ENCODE measurements at regions of chr1 and their contacts with region 1.

Region 1: DNA sequence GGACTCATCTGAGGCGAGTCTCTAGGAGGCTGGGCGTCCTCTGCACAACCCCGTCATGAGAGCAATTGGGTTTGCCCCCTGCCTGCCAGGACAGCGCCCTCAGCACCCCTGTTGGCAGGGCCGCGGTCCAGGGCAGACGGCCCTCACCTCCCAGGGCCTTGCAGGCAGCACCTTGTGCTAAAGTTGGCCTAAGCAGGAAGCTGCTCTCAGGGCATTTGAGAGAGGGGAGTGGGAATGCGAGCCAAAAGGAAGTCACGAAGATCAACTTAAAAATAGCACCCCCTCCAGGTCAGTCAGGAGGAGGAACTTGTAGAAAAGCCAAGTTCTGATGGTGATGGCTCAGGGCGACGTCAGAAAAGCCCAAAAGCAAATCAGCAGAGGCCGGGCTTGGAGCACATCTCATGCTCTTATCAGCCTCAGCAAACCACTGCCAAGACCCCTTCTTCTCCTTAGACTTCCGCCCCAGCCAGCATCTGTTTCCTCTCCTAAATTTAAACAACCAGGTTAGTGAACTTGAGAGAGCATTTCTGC is 12.6 kb upstream of the ADORA3 start:
- DNase-seq: peak in 3 of 10 donors; percentile 44 to 50 (median 49)
- H3K4me3 ChIP-seq: peak overlapping the region; percentile 0 to 68 (median 52)
- H3K27ac ChIP-seq: peak overlapping the region in 53 of 59 donors; percentile 12 to 91 (median 77)
- H3K27me3 ChIP-seq: no peaks in the 10 kb centered on the region
- CTCF ChIP-seq: peak in 31 of 56 donors; percentile 8 to 41 (median 21)

Region 2: DNA sequence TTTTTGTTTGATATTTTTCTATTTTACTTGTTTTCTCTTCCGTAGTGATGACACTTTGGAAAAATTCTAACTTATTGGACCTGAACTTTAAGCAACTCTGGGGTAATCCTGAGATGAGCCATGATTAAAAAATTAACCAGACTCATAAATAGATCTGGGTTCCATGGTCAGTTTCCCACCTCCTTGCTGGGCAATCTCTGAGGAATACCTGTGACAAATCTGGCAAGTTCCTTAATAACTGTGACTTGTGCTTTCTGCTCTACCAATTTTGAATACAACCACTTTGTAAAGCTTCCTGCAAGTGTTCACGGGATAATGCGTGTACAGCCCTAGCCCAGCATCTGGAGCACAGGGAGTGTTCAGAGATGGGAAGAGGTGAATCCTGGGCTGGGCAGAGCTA is 91.8 kb before region 1 on chr1:
- intact Hi-C with region 1: no loop called
- DNase-seq: no peak
- H3K4me3 ChIP-seq: no peak overlapping the region
- H3K27ac ChIP-seq: no peak overlapping the region
- H3K27me3 ChIP-seq: no peaks in the 10 kb centered on the region
- CTCF ChIP-seq: no peak

Region 3: GRCh38 chr1:111441573-111442192 is 74.4 kb before region 1 on chr1:
- intact Hi-C with region 1: no loop called
- DNase-seq: no peak
- H3K4me3 ChIP-seq: no peak overlapping the region
- H3K27ac ChIP-seq: no peak overlapping the region
- H3K27me3 ChIP-seq: no peaks in the 10 kb centered on the region
- CTCF ChIP-seq: peak in 25 of 56 donors; percentile 9 to 38 (median 21)

Region 4: DNA sequence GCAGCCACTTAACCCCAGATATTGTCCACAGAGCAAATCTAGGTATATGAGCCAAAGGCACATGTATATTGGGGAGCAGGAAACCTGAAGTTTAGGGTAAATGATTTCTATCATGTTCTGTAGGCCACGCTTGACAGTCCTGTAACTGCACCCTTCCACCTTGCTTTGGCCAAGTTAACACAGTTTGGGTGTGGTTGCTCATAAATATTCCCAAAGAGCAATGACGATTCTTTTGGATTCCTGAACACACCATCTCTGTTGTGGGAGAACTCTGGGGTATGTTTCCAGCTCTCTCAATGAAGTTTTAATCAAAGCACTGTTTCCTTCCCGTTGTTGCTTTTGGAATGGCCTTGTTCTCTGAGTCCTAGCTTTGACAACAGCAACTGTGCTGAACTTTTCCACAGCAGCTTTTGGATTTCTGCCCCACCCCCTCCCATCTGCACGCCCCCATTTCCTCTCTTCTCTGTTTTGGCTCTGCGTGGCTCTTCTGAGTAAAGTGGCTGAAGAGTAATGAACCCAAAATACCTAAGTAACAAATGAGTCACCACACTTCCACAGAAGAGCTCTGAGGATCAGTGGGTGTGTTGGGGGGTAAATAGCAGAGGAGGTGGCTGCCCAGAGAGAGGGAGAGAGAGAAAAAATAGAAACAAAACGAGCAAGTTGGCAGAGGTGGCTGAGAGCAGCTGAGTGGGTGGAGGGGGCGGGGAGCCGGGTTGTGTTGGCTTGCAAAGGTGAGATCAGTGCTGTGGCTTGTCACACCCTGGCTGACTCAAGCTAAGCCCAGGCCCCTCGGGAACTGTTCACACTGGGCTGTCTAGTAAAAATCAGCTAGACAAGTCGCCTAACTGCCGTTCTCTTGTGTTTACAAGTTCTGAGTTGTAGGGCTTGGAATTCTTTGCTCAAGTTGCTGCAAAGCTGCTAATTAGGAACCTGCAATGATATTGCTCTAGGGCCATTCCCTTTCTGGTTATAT is 76.6 kb after region 1 on chr1:
- intact Hi-C with region 1: no loop called
- DNase-seq: peak in 6 of 10 donors; percentile 40 to 71 (median 53)
- H3K4me3 ChIP-seq: peak overlapping the region in 13 of 59 donors; percentile 5 to 36 (median 15)
- H3K27ac ChIP-seq: peak overlapping the region in 39 of 59 donors; percentile 2 to 75 (median 45)
- H3K27me3 ChIP-seq: no peaks in the 10 kb centered on the region
- CTCF ChIP-seq: no peak

Region 5: DNA sequence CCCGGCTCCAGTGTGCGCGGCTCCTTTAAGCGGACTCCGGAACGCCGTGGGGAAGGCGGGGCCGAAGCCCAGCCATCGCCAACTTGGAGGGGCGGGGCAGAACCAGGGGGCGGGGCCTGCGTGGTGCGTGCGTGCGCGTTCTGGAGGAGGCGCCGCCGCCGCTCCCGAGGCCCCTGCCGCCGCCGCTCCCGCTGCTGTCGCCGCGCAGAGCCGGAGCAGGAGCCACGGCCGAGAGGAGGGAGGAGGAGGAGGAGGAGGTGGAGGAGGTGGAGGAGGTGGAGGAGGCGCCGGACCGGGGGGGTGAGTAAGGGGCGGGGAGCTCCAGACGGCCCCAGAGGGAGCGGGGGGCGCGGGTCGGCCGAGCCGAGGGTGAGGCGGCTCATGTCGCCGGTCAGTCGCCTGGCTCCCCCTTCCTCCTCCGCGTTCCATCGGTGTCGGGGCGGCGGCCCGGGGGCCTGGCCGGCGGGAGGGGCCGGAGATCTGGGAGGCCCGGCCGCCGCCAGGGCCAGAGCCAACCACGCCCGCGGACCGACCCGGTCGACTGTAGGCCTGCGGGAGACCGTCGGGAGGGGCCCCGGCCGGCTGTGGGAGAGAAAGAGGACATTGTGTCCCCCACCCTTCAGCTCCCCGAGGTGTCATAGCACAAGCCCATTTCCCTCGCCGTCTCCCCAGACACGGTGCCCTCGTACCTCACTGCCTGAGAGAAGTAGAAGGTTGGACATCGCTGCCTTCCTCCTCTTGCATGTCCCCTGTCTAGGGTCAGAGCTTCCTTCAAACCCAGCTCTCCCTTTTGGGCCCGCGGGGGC is 103.8 kb after region 1 on chr1 and contains the start of gene RAP1A:
- intact Hi-C with region 1: loop called in 1 of 2 experiments (anchors 10 kb)
- DNase-seq: peak; percentile 89 to 96 (median 93)
- H3K4me3 ChIP-seq: peak within 1 kb of the TSS; percentile 54 to 97 (median 90)
- H3K27ac ChIP-seq: peak within 1 kb of the TSS; percentile 57 to 98 (median 94)
- H3K27me3 ChIP-seq: no peaks in the 10 kb centered on the region
- CTCF ChIP-seq: peak in 6 of 56 donors; percentile 3 to 24 (median 14)
- total RNA-seq, gene RAP1A: 40.2 to 95.0 (median 58.6) TPM

Measured in dorsolateral prefrontal cortex (tissue), 120 donors.